Dendritic cell treated with granulocyte-macrophage colony-stimulating factor and Interleukin-4, amounts not matched to agents 40 ng/mL and 50 ng/mL, for 4 days (primary cell): ENCODE measurements at regions of chr3 and their contacts with region 1.

Region 1: DNA sequence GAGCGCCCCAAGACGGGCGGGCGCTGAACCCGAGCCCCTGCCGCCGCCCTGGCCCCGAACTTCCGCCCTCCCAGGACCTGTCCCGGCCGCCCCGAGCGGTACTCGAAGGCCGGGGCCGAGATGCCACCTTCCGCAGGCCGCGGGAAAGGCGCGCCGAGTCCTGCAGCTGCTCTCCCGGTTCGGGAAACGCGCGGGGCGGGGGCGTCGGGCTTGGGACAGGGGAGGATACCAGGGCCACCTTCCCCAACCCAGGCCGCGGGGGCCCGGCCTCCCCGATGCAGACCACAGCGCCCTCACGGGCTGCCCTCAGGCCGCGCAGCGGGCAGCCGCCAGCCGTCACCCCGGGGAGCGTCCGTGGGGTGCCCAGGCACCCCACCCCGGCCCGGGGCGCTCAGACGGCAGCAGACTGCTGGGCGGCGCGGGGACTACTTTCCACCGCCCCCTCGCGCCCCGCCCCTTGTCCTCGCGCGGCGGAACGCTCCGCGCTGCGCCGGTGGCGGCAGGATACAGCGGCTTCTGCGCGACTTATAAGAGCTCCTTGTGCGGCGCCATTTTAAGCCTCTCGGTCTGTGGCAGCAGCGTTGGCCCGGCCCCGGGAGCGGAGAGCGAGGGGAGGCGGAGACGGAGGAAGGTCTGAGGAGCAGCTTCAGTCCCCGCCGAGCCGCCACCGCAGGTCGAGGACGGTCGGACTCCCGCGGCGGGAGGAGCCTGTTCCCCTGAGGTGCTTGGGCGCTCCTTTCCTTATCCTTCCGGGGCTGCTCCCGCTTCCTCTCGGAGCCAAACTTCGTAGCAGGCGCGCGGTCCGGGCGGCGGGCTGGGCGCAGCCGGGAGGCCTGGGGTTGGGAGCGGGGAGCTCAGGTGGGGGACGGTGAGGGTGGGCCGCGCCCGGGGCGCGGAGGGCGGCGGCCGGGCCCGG is at the start of gene CTNNB1:
- H3K4me3 Mint-ChIP-seq: peak within 1 kb of the TSS; percentile 97
- H3K27ac Mint-ChIP-seq: peak within 1 kb of the TSS; percentile 97
- H3K4me1 Mint-ChIP-seq: peaks cover 37% of the 10 kb centered on the region
- H3K27me3 Mint-ChIP-seq: peaks cover 2% of the 10 kb centered on the region

Region 2: DNA sequence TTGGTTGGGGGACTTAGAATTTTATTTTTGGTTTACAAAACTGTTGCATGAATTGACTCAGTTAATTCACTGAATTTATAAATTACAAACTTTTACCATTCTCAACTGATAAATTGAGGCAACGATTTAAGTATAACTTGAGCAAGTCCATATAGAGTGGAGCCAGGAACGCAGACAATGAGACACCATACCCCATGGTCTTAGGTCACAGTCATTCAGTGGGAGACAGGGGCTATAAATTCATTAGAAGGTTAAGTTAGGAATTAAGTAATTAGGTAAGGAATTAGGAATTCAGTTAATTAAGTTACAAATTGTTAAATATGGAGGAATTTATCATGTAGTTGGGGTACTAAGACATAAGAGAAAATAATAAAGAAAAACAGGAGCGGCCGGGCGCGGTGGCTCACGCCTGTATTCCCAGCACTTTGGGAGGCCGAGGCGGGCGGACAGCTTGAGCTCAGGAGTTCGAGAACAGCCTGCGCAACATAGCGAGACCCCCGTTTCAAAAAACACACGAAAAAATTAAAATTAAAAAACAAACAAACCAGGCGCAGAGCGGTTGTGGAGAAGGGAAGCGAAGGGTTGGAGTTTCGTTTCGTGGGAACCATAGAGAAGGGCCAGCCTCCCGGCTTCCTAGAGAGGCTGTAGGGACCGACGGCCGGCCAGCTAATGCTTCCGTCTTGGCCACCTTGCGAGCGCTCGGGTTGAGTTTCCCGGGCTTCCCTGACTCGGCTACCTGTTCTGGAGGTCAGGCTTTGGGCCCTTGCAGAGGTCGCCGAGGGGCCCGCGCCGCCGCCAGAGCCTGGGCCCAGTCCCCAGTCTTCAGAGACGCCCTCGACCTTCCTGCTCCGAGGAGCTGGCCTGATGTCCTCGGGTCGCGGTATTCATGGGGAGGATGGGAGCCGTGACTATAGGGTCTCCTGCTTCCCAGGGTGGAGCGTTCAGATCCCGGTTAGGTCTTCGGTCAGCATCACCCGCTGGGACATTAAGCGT is 722.4 kb before region 1 on chr3 and contains the start of gene ZNF619:
- intact Hi-C with region 1: loop called (anchors 10 kb)
- H3K4me3 Mint-ChIP-seq: peak within 1 kb of the TSS; percentile 95
- H3K27ac Mint-ChIP-seq: peak within 1 kb of the TSS; percentile 99
- H3K4me1 Mint-ChIP-seq: peaks cover 17% of the 10 kb centered on the region
- H3K27me3 Mint-ChIP-seq: no peaks in the 10 kb centered on the region

Region 3: GRCh38 chr3:40580494-40581091 is 618.6 kb before region 1 on chr3:
- intact Hi-C with region 1: loop called (anchors 5 kb)
- H3K4me3 Mint-ChIP-seq: no peak overlapping the region
- H3K27ac Mint-ChIP-seq: no peak overlapping the region
- H3K4me1 Mint-ChIP-seq: peaks cover 9% of the 10 kb centered on the region
- H3K27me3 Mint-ChIP-seq: peaks cover 6% of the 10 kb centered on the region

Region 4: DNA sequence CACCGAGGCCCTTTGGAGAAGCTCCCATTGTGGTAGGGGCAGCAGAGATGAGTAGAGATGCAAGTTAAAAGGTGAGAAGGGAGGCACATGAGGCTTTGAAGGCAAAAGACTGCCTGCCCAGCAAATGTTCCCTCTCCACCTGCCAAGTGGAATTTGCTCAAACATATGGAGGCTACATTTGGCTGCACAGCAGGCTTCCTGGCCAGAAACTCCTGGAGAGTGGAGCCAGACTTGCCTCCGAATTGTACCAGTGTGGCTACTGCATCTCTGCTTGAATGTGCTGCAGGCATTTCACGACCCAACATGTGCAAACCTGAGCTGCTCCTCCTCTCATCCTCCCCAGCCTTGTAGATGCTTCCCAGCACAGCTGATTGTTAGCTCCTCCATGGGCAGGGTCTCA is 445.3 kb before region 1 on chr3:
- intact Hi-C with region 1: loop called (anchors 10 kb)
- H3K4me3 Mint-ChIP-seq: no peak overlapping the region
- H3K27ac Mint-ChIP-seq: no peak overlapping the region
- H3K4me1 Mint-ChIP-seq: peaks cover 29% of the 10 kb centered on the region
- H3K27me3 Mint-ChIP-seq: peaks cover 7% of the 10 kb centered on the region

Region 5: GRCh38 chr3:40930131-40930538 is 269.1 kb before region 1 on chr3:
- intact Hi-C with region 1: loop called (anchors 10 kb)
- H3K4me3 Mint-ChIP-seq: no peak overlapping the region
- H3K27ac Mint-ChIP-seq: no peak overlapping the region
- H3K4me1 Mint-ChIP-seq: peaks cover 15% of the 10 kb centered on the region
- H3K27me3 Mint-ChIP-seq: no peaks in the 10 kb centered on the region

Region 6: GRCh38 chr3:41117398-41117870 is 81.8 kb before region 1 on chr3:
- intact Hi-C with region 1: loop called (anchors 2 kb)
- H3K4me3 Mint-ChIP-seq: no peak overlapping the region
- H3K27ac Mint-ChIP-seq: peak overlapping the region; percentile 89
- H3K4me1 Mint-ChIP-seq: peaks cover 50% of the 10 kb centered on the region
- H3K27me3 Mint-ChIP-seq: no peaks in the 10 kb centered on the region

Region 7: GRCh38 chr3:41209646-41210045 is 10.4 kb after region 1 on chr3:
- intact Hi-C with region 1: no loop called
- H3K4me3 Mint-ChIP-seq: no peak overlapping the region
- H3K27ac Mint-ChIP-seq: no peak overlapping the region
- H3K4me1 Mint-ChIP-seq: peaks cover 72% of the 10 kb centered on the region
- H3K27me3 Mint-ChIP-seq: no peaks in the 10 kb centered on the region

Region 8: DNA sequence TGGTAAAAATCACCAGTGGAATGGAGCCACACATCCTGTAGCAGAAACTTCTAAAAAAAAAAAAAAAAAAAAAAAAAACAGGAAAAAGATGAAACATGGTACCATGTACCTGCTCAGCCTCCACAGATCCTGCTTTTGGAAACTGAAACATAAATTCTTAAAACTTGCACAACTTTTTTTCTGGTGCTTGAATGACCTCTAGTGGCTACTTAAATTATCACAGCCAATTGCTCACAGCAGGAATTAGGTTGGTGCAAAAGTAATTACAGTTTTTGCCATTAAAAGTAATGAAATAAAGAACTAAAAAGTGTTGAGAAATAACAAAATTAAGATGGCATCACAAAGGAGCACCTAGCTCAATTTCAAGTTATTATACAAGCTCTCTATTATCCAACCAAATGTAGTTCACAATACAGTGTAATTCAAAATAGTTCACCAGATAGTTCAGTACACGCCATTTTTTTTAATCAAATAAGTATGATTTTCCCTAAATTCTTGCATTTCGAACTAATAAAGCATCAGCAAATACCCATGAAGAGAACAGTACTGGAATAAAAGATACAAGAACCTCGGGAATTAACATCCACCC is 682.1 kb after region 1 on chr3:
- intact Hi-C with region 1: loop called (anchors 10 kb)
- H3K4me3 Mint-ChIP-seq: no peak overlapping the region
- H3K27ac Mint-ChIP-seq: no peak overlapping the region
- H3K4me1 Mint-ChIP-seq: no peaks in the 10 kb centered on the region
- H3K27me3 Mint-ChIP-seq: no peaks in the 10 kb centered on the region